ENCODE measurements at regions of chr11 and their contacts with region 1.

Region 1: DNA sequence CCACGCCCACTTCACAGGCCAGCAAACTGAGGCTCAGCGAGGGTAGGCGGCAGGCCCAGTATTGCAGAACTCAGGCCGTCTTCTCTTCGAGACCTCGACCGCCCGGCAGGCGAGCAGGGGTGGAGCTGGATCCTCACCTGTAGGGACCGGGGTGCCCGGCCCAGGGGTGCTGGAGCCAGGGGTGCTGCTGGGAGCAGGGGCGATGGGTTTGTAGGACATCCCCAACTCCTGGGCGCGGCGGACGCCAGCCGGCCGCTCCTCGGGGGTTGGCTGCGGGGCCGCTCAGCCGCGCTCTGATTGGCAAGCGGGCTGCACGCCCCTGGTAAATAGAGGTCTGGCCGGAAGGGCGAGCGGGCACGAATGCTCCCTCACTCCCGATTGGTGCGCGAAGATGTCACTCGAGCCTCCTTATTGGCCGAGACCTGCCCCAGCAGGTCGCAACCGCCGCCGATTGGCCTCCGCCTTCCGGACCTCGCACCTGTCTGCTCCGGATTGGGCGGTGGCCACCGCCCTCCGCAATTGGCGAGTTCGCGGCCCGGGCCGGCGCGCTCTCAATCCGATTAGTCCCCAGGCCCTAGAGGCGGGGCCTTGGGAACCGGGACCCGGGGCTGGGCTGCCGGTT is at the start of gene CDK2AP2:
- DNase-seq: peak; percentile 99
- ATAC-seq: peak; percentile 78
- H3K4me3 Mint-ChIP-seq: peak within 1 kb of the TSS; percentile 89
- H3K27ac Mint-ChIP-seq: peak within 1 kb of the TSS; percentile 88
- H3K4me1 Mint-ChIP-seq: peaks cover 31% of the 10 kb centered on the region
- H3K27me3 Mint-ChIP-seq: no peaks in the 10 kb centered on the region
- total RNA-seq, gene CDK2AP2: 64.1 to 68.7 TPM

Region 2: DNA sequence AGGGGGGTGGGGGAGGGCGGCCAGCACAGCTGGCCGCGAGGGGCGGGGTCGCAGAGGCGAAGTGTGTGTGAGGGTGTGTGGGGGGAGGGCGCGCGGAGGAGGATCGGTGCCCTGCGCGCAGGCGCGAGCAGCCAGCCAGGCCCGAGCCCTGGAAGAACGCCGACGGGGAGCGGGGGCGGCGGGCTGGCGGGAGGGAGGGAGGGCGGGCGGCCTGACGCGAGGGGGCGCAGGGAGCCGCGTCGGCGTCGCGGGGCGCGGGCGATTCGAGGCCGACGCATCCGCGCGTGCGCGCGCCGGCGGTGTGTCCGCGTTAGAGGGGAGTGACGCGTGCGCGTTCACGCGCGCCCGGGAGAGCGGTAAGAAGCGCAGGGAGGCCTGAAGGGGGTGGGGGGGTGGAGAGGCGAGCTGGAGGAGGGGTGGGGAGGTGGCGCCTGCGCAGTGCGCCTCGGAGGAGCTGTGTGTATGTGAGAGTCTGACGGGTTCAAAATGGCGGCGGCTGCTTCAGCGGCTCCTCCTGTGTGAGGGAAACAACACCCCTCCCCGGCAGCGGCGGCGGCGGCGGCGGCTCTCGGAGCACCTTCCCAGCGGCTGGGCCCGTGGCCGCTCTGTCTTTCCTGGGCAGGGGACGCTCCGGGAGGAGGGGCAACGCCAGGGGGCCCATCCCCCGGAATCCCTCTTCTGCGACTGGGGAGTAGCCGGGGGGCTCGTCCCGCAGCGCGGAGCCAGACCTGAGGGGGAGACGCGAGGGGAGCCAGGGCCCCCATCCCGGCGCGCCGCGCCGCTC is 389.0 kb before region 1 on chr11 and contains the start of gene KDM2A:
- CTCF ChIA-PET with region 1: no interaction called
- POLR2A ChIA-PET with region 1: no interaction called
- intact Hi-C with region 1: loop called in 1 of 2 experiments (anchors 1 kb)
- DNase-seq: peak; percentile 100
- ATAC-seq: peak; percentile 85
- H3K4me3 Mint-ChIP-seq: peak within 1 kb of the TSS; percentile 98
- H3K27ac Mint-ChIP-seq: peak within 1 kb of the TSS; percentile 83
- H3K4me1 Mint-ChIP-seq: peaks cover 28% of the 10 kb centered on the region
- H3K27me3 Mint-ChIP-seq: no peaks in the 10 kb centered on the region
- total RNA-seq, gene KDM2A: 74.8 to 89.7 TPM

Region 3: DNA sequence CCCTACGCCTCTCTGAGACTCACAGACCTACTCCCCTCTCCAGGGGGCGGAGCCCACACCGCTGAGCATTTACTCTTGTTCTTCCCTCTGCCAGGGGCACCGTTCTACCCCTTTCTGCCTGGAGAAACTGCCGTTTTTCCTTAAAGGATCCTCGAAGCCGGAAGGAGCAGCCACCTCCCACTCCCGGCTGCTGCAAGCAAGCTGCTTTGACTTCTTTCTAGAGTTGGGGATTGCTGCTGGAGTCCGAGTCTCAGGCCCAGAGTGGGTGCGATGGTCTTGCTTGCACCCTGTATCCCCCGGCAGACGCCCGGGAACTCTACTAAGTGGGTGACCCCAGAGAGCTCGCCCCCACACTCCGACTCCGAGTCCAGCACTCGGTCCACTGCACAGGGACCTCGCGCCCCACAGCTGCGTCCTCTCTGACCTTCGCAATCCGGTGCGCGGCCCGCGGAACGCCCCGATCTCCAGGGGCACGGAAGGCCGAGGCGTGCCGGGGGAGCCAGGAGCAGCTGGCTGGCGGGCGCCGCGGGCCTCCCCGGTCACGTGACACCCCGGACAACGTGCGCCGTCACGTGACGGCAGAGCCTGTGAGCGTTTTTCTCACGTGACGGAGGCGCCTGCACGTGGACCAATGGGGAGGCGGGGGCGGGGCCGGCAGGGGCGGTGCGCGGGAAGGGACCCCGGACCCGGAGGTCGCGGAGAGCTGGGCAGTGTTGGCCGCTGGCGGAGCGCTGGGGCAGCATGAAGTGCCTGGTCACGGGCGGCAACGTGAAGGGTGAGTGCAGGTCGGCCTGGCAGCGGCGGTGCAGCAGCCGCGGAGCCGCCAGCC is 116.5 kb before region 1 on chr11 and contains the start of gene RAD9A:
- CTCF ChIA-PET with region 1: no interaction called
- POLR2A ChIA-PET with region 1: no interaction called
- intact Hi-C with region 1: loop called in 1 of 2 experiments (anchors 1 kb)
- DNase-seq: peak; percentile 97
- ATAC-seq: peak; percentile 74
- H3K4me3 Mint-ChIP-seq: peak within 1 kb of the TSS; percentile 89
- H3K27ac Mint-ChIP-seq: peak within 1 kb of the TSS; percentile 80
- H3K4me1 Mint-ChIP-seq: peaks cover 34% of the 10 kb centered on the region
- H3K27me3 Mint-ChIP-seq: no peaks in the 10 kb centered on the region
- total RNA-seq, gene RAD9A: 28.8 to 30.0 TPM

Region 4: GRCh38 chr11:67428052-67428914 is 79.7 kb before region 1 on chr11 and contains the start of gene RPS6KB2:
- CTCF ChIA-PET with region 1: no interaction called
- POLR2A ChIA-PET with region 1: no interaction called
- intact Hi-C with region 1: loop called in 1 of 2 experiments (anchors 1 kb)
- DNase-seq: peak; percentile 99
- ATAC-seq: peak; percentile 81
- H3K4me3 Mint-ChIP-seq: peak within 1 kb of the TSS; percentile 90
- H3K27ac Mint-ChIP-seq: peak within 1 kb of the TSS; percentile 98
- H3K4me1 Mint-ChIP-seq: peaks cover 37% of the 10 kb centered on the region
- H3K27me3 Mint-ChIP-seq: no peaks in the 10 kb centered on the region
- total RNA-seq, gene RPS6KB2: 53.4 to 57.2 TPM

Region 5: DNA sequence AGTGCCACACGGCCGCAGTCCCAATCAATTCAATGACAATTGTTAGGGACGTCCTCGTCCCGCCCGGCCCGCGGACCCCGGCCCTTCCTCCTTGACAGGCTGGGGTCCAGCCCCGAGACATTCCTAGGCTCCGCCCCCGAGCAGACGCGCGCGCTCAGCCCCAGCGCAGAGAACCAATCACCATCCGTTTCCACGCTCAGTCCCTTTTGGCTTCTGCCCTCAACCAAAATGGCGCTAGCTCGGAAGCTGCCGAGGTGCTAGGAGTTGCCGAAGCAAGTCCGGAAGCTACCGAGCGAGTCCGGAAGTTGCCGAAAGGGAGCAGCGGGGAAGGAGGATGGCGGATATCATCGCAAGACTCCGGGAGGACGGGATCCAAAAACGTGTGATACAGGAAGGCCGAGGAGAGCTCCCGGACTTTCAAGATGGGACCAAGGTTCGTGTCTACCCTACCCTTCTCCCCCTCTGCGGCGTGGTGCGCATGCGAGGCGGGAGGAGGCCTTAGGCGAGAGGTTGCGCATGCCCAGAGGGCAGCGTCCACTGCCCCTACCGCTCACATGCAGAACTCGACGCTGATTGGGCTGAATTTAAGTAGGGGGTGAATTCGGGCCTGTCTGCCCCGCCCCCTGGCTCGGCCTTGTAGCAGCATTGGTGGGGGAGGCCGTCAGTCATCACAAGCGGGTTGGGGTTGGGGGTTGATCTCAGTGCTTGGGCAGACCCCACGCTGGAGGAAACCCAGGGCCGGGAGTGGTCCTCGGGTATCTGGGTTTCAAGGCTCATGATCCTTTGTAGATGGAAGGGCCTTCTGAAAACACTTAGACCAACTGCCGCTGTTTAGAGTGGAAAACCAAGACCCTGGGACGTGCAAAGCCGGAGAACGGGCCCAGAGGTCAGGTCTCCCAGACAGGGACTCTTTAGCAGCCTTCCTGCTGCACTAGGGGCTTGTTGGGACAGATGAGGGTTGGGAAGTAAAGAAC is 24.9 kb before region 1 on chr11 and contains the start of gene AIP:
- CTCF ChIA-PET with region 1: interaction called, 4 read pairs
- POLR2A ChIA-PET with region 1: no interaction called
- intact Hi-C with region 1: loop called (anchors 1 kb)
- DNase-seq: peak; percentile 99
- ATAC-seq: peak; percentile 72
- H3K4me3 Mint-ChIP-seq: peak within 1 kb of the TSS; percentile 86
- H3K27ac Mint-ChIP-seq: peak within 1 kb of the TSS; percentile 99
- H3K4me1 Mint-ChIP-seq: peaks cover 50% of the 10 kb centered on the region
- H3K27me3 Mint-ChIP-seq: no peaks in the 10 kb centered on the region
- total RNA-seq, gene AIP: 142 to 144 TPM

Region 6: DNA sequence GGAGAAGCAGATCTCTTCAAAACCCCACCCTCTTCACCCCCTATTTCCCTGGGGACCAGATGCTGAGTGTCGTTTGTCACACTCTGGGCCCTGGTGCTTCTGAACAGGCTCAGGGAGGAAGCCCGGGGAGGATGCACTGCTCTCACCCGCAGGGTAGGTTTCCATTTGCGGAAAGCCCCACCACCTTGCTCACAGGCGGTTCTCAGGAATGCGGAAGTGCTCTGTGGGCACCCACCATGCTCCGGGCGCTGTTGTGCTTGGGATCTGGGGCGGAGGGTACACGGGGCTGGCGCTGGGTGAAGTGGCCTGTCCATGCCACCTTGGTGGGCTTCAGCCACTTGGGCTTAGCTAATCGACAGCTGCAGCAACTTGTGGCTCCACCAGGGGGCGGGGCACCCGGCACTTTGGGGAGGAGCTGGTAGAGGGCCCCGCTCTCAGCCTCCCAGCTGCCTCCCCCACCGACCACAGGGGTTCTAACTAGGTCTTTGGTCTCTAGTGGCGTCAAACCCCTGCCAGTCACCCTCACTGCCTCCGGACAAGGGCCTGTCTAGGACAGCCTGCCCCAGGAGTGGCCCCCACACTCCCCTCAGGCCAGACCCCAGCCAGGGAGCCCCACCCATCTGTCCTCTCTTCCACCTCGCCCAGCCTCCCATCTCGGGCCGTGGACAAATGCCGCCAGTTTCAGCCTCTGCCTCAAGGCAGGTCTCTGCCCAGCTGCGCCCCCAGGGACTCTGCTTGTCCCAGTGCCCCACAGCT is 106.2 kb after region 1 on chr11:
- CTCF ChIA-PET with region 1: interaction called, 3 read pairs
- POLR2A ChIA-PET with region 1: no interaction called
- intact Hi-C with region 1: loop called in 1 of 2 experiments (anchors 5 kb)
- DNase-seq: peak; percentile 92
- ATAC-seq: peak; percentile 90
- H3K4me3 Mint-ChIP-seq: peak overlapping the region; percentile 67
- H3K27ac Mint-ChIP-seq: peak overlapping the region; percentile 93
- H3K4me1 Mint-ChIP-seq: peaks cover 22% of the 10 kb centered on the region
- H3K27me3 Mint-ChIP-seq: no peaks in the 10 kb centered on the region

Region 7: DNA sequence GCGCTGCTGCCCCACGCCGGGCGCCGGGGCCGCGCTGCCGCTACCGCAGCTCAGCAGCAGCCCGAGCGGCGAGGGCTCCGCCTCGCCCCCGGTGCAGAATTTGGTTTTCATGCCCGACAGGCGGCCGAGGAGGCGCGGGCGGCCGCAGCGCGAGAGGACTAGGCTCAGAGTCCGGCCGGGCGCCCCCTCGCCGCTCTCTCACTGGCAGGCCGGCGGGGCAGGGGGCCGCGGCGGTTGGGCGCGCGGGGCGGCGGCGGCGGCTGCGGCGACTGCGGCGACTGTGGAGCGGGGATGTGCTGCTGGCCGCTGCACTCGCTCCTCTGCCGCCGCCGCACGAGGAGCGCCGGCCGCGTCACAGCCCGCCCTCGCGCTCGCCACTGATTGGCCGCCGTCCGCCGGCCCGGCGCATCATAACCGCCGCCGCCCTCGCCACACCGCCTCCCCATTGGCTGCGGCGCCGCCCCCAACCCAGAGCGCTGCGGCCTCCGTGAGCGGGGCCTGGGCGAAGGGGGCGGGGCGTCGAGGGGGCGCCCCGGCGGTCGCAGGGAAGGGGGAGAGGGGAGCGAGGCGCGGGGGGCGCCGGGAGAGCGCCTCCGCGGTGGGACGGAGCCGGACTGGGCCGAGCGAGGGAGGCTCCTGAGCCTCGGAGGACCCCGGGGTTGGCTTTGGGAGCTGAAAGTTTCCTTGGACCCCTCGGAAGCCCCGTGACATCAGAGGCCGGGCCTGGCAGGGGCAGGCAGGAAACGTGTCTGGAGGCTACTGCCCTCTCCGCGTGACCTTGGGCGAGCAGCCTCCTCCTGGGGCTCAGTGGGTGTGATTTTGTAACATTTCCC is 613.3 kb after region 1 on chr11 and contains the start of gene CHKA:
- CTCF ChIA-PET with region 1: no interaction called
- POLR2A ChIA-PET with region 1: no interaction called
- intact Hi-C with region 1: loop called in 1 of 2 experiments (anchors 1 kb)
- DNase-seq: peak; percentile 94
- ATAC-seq: peak; percentile 97
- H3K4me3 Mint-ChIP-seq: peak within 1 kb of the TSS; percentile 71
- H3K27ac Mint-ChIP-seq: peak within 1 kb of the TSS; percentile 68
- H3K4me1 Mint-ChIP-seq: peaks cover 7% of the 10 kb centered on the region
- H3K27me3 Mint-ChIP-seq: no peaks in the 10 kb centered on the region
- total RNA-seq, gene CHKA: 5.5 to 7.5 TPM